BJ (cell line): ENCODE measurements at regions of chr11 and their contacts with region 1.

Region 1: GRCh38 chr11:63838678-63839507 is at the start of gene MARK2:
- DNase-seq: peak; percentile 74
- H3K4me3 ChIP-seq: peak within 1 kb of the TSS; percentile 92
- H3K27me3 ChIP-seq: no peaks in the 10 kb centered on the region
- CTCF ChIP-seq: no peak
- polyA plus RNA-seq, gene MARK2: 11.1 and 13.8 TPM in 2 replicates

Region 2: DNA sequence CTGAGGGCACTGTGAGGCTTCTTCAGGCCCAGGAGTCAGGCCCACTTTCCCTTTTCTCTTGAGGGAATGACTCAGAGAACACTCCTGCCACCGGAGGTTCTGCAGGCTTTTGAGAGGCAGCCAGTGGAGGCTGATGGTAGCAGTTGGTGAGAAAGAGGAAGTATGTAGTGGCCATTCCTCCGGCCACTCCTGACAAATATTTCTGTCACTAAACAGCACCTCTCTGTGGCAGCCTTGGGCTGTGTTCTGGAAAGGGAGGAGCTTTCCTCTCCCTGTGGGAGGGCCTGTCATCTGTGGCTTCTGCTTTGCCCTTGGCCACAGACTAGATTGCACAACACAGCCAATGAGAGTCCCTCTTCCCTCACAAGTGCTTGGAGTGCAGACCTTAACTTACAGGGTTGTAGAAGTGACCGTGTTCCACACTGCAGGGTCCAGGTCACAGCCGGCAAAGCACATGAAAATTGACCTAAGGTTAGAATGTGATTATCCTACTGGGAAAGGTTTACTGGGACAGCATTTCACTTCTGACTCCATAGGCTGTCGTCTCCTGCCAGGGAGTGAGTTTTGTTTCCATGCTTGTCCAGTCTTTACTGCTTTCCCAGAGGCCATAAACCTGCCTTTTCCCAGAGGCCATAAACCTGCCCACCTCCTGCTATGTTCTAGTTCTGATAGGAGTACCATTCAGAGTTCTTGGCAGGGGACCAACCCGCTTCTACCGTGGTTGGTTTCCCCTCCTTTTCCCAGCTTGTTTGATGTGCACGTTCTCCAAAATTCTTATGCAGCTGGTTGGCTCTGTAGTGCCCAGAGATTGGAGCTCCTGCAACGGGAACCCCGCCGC is 33.3 kb after region 1 on chr11:
- CTCF ChIA-PET with region 1: interaction called, 11 read pairs
- POLR2A ChIA-PET with region 1: interaction called, 9 read pairs
- DNase-seq: peak; percentile 92
- H3K4me3 ChIP-seq: no peak overlapping the region
- H3K27me3 ChIP-seq: no peaks in the 10 kb centered on the region
- CTCF ChIP-seq: peak; percentile 40

Region 3: DNA sequence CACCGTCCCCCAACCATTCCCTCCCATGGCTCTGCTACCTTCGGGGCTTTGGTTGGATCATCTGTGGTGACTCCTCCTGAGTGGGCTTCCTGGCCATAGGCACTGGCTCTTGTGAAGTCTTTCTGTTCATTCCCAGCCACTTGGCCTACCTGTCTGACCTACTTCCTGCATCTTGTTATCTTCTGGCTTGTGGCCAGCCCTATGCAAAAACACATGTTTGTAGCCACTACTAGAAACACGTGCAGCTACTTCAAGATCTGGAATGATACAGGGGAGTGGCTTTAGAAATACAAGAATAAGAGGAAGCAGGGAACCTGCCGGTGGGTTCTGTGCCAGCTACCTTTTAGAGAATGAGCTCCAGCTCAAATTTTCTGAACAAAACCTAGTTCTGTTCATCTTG is 57.2 kb after region 1 on chr11:
- CTCF ChIA-PET with region 1: interaction called, 10 read pairs
- POLR2A ChIA-PET with region 1: no interaction called
- DNase-seq: no peak
- H3K4me3 ChIP-seq: no peak overlapping the region
- H3K27me3 ChIP-seq: no peaks in the 10 kb centered on the region
- CTCF ChIP-seq: no peak

Region 4: GRCh38 chr11:63916837-63917691 is 78.2 kb after region 1 on chr11 and contains the start of gene RCOR2:
- CTCF ChIA-PET with region 1: interaction called, 13 read pairs
- POLR2A ChIA-PET with region 1: interaction called, 3 read pairs
- DNase-seq: no peak
- H3K4me3 ChIP-seq: peak within 1 kb of the TSS; percentile 57
- H3K27me3 ChIP-seq: peaks cover 2% of the 10 kb centered on the region; the same call in 1 of the 2 replicates
- CTCF ChIP-seq: no peak
- polyA plus RNA-seq, gene RCOR2: 1.6 and 2.5 TPM in 2 replicates

Region 5: GRCh38 chr11:63945477-63946163 is 106.7 kb after region 1 on chr11:
- CTCF ChIA-PET with region 1: interaction called, 188 read pairs
- POLR2A ChIA-PET with region 1: no interaction called
- DNase-seq: no peak
- H3K4me3 ChIP-seq: no peak overlapping the region
- H3K27me3 ChIP-seq: no peaks in the 10 kb centered on the region
- CTCF ChIP-seq: peak; percentile 68

Region 6: GRCh38 chr11:64074239-64074638 is 235.3 kb after region 1 on chr11:
- CTCF ChIA-PET with region 1: no interaction called
- POLR2A ChIA-PET with region 1: no interaction called
- DNase-seq: no peak
- H3K4me3 ChIP-seq: no peak overlapping the region
- H3K27me3 ChIP-seq: peaks cover 3% of the 10 kb centered on the region; the same call in 1 of the 2 replicates
- CTCF ChIP-seq: no peak

Region 7: GRCh38 chr11:64141081-64141783 is 302.3 kb after region 1 on chr11:
- CTCF ChIA-PET with region 1: no interaction called
- POLR2A ChIA-PET with region 1: no interaction called
- DNase-seq: no peak
- H3K4me3 ChIP-seq: no peak overlapping the region
- H3K27me3 ChIP-seq: no peaks in the 10 kb centered on the region
- CTCF ChIP-seq: no peak

Region 8: GRCh38 chr11:64152841-64153691 is 314.2 kb after region 1 on chr11:
- CTCF ChIA-PET with region 1: interaction called, 14 read pairs
- POLR2A ChIA-PET with region 1: no interaction called
- DNase-seq: no peak
- H3K4me3 ChIP-seq: no peak overlapping the region
- H3K27me3 ChIP-seq: no peaks in the 10 kb centered on the region
- CTCF ChIP-seq: peak; percentile 96